ENCODE measurements at regions of chr1 and their contacts with region 1.

Region 1: GRCh38 chr1:205430696-205431305 is 8.9 kb upstream of the LEMD1 start:
- DNase-seq: peak; percentile 44 to 60
- ATAC-seq: peak; percentile 79 to 88
- H3K4me3 ChIP-seq: peak overlapping the region; percentile 48
- H3K27ac ChIP-seq: peak overlapping the region; percentile 72 to 80
- H3K4me1 ChIP-seq: 0 out of 3 replicates have a peak, but pooled peaks cover 2% of the 10 kb centered on the region
- CTCF ChIP-seq: peak; percentile 99
- EP300 ChIP-seq: no peak
- POLR2A ChIP-seq: no peak
- RAD21 ChIP-seq: peak; percentile 79 to 88

Region 2: DNA sequence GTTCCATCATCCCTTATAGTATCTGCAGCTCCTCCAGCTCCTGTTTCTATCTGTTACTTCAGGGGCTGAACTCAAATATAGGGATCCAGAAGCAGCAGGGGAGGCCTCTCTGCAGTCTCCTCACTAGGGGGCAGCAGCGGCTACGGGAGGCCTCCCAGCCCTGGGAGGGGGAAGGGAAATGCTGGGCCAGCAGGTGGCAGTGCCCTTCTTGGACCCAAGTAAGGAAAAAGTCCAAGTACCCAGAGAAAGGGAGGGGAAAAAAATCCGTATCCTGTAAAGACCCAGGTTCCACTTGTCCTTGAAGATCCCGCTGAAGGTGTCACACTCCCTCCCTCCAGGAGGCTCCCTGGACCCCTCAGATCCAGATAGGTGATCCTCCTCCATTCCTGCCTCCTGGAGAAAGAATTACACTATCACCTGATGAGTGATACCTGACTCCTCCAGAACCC is 95.1 kb before region 1 on chr1:
- CTCF ChIA-PET with region 1: interaction called, 42 read pairs
- POLR2A ChIA-PET with region 1: no interaction called
- DNase-seq: peak; percentile 89 to 90
- ATAC-seq: peak; percentile 91 to 97
- H3K4me3 ChIP-seq: no peak overlapping the region
- H3K27ac ChIP-seq: no peak overlapping the region
- H3K4me1 ChIP-seq: peaks cover under 1% of the 10 kb centered on the region; the same call in 1 of the 3 replicates
- CTCF ChIP-seq: peak; percentile 99
- EP300 ChIP-seq: no peak
- POLR2A ChIP-seq: no peak
- RAD21 ChIP-seq: peak; percentile 88 to 92

Region 3: GRCh38 chr1:205391386-205391785 is 39.4 kb before region 1 on chr1:
- CTCF ChIA-PET with region 1: interaction called, 12 read pairs
- POLR2A ChIA-PET with region 1: no interaction called
- DNase-seq: no peak
- ATAC-seq: no peak
- H3K4me3 ChIP-seq: no peak overlapping the region
- H3K27ac ChIP-seq: no peak overlapping the region
- H3K4me1 ChIP-seq: no peaks in the 10 kb centered on the region
- CTCF ChIP-seq: no peak
- EP300 ChIP-seq: no peak
- POLR2A ChIP-seq: no peak
- RAD21 ChIP-seq: no peak

Region 4: GRCh38 chr1:205416322-205416721 is 14.5 kb before region 1 on chr1:
- CTCF ChIA-PET with region 1: interaction called, 66 read pairs
- POLR2A ChIA-PET with region 1: no interaction called
- DNase-seq: no peak
- ATAC-seq: no peak
- H3K4me3 ChIP-seq: no peak overlapping the region
- H3K27ac ChIP-seq: no peak overlapping the region
- H3K4me1 ChIP-seq: no peaks in the 10 kb centered on the region
- CTCF ChIP-seq: no peak
- EP300 ChIP-seq: no peak
- POLR2A ChIP-seq: no peak
- RAD21 ChIP-seq: no peak

Region 5: DNA sequence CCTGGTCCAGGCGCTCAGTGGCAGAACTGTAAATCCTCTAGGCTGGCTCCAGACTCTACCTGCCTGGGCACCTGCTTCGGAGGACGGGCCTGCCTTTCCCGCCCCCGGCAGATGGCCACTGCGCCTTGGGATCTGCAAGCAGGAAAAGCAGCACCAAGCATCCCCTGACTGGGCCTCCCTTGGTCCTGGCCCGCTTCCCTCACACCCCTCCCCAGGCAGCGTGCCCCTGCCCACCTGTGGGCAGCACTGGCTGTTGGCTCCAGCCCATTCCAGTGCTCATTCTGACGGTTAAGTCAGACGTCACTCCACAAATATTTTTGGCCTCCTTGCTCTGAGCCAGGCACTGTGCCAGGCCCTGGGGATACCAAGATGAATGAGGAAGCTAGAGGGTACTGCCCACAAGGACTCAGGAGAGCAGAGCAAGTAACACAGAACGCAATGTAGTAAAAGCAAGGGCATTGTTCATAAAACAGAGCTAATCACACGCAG is 47.0 kb after region 1 on chr1:
- CTCF ChIA-PET with region 1: interaction called, 146 read pairs
- POLR2A ChIA-PET with region 1: no interaction called
- DNase-seq: peak; percentile 52 to 84
- ATAC-seq: peak; percentile 49 to 84
- H3K4me3 ChIP-seq: no peak overlapping the region
- H3K27ac ChIP-seq: peak overlapping the region; percentile 58 to 66; a peak in 4 of 6 replicates
- H3K4me1 ChIP-seq: peaks cover 17% of the 10 kb centered on the region
- CTCF ChIP-seq: no peak
- EP300 ChIP-seq: no peak
- POLR2A ChIP-seq: no peak
- RAD21 ChIP-seq: no peak

Region 6: DNA sequence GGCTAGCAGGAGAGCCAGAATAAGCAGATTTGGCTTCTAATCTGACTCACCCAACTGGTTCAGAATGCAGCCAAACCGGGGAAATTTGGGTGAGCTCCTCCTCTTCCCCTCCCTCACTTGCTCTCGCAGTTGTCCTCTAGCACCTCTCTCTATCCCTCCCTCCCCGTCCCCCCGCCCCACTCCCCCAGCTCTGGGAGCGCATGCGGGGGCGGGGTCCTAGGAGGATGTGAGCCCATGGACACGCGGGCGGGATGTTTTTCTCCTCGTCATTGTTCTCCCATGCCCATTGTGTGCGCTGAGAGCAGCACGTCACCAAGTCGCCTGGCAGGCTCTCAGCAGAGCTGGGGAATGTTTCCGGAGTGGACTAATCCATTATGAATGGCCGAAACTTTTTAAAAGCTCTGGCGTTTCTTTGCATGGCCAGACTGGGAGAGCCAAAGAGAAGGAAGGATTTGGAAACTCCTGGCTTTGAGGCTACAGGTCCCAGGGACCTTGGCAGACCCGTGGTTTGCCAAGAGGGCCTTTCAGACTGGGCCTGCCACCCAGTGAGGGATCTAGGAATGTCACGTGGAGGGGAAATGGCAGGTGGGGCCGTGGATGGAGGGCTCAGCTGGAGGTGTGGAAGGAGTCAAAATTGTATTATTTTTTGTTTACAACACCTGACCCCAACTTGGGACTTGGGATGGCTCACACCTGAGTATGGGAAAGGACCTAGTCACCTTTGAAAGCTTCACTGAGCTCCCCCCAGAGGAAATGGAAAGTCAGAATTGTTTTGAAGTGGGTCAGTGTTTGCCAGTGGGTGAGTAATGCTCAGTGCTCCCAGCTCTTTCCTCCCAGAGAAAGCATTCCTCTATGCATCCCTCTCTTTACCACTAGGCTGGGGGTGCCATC is 112.9 kb after region 1 on chr1:
- CTCF ChIA-PET with region 1: no interaction called
- POLR2A ChIA-PET with region 1: no interaction called
- DNase-seq: peak in 1 of 2 experiments; percentile 63
- ATAC-seq: peak; percentile 62 to 78
- H3K4me3 ChIP-seq: peak overlapping the region; percentile 29; the same call in 1 of the 3 replicates
- H3K27ac ChIP-seq: peak overlapping the region; percentile 12 to 65; a peak in 3 of 6 replicates
- H3K4me1 ChIP-seq: peaks cover 9% of the 10 kb centered on the region; the same call in 2 of the 3 replicates
- CTCF ChIP-seq: no peak
- EP300 ChIP-seq: no peak
- POLR2A ChIP-seq: no peak
- RAD21 ChIP-seq: no peak